CD8-positive, alpha-beta memory T cell (primary cell): ENCODE measurements at regions of chr1 and their contacts with region 1.

Region 1: DNA sequence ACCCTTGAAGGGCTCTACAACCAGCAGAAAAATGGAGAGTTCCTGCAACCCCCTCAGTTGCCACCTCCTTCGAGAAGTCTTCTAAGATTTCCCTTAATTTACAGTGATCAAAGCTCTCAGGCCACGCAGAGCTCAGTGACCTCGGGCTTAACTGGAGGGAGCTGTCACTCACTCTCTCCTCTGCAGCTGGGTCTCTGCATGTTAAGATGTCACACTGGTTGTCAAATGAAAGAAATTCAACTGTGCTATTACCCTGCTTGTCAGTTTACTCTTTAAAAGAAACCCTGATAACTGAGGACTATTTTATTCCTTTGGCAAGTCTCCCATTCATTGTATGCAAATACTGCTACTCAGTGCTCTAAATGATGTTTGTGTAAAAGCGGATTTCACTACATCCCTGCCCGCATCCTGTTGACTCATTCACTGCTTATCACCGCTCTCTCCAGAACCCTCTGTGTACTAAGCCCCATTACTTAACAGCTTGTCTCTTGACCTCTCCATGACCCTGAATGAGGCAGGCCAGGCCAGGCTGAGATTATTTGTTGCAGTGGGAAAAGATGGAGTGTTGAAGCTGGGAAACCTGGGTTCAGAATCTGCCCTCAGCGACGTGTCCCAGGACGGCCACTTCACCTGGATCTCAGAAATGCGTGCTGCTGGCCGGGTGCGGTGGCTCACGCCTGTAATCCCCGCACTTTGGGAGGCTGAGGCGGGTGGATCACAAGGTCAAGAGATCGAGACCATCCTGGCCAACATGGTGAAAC is 13.7 kb downstream of the DHRS3 start:
- DNase-seq: peak; percentile 43 to 76 (median 50)
- H3K4me3 ChIP-seq: no peak overlapping the region
- H3K4me3 Mint-ChIP-seq: peak overlapping the region; percentile 31 to 80 (median 64)
- H3K27ac ChIP-seq: peak overlapping the region; percentile 3
- H3K27ac Mint-ChIP-seq: peak overlapping the region; percentile 11 to 96 (median 74)
- H3K4me1 ChIP-seq: peaks cover 60% of the 10 kb centered on the region
- H3K4me1 Mint-ChIP-seq: peaks cover 46 to 82% (median 59%) of the 10 kb centered on the region in 3 donors
- H3K27me3 ChIP-seq: no peaks in the 10 kb centered on the region
- H3K27me3 Mint-ChIP-seq: peaks cover 0 to 2% of the 10 kb centered on the region in 2 donors

Region 2: GRCh38 chr1:12506281-12507280 is 97.7 kb before region 1 on chr1:
- CTCF ChIA-PET with region 1: interaction called, 4 read pairs
- POLR2A ChIA-PET with region 1: interaction called, 10 read pairs
- DNase-seq: no peak
- H3K4me3 ChIP-seq: no peak overlapping the region
- H3K4me3 Mint-ChIP-seq: no peak overlapping the region
- H3K27ac ChIP-seq: no peak overlapping the region
- H3K27ac Mint-ChIP-seq: no peak overlapping the region
- H3K4me1 ChIP-seq: peaks cover 29% of the 10 kb centered on the region
- H3K4me1 Mint-ChIP-seq: peaks cover 21 to 48% (median 24%) of the 10 kb centered on the region in 3 donors
- H3K27me3 ChIP-seq: no peaks in the 10 kb centered on the region
- H3K27me3 Mint-ChIP-seq: no peaks in the 10 kb centered on the region